ENCODE measurements at regions of chr22 and their contacts with region 1.

Region 1: DNA sequence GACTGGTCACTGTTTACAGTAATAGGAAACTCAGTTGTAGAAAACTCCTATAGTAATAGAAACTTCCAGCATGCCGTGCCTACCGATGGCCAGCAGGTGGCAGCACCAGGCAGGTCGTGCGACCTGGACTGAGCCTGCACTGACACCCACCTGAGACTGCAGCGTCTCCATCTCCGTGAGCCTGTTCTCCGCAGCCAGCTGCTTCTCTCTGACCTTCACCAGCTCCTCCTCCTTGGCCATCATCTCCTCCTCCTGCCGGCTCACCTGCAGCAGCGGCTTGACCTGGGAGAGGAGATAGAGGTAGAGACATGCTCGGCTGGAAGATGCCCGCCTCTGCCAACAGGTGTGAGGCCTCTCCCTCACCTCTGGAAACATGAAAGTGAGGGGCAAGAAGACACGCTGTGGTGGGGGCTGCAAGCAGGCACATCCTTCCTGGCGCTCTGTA is 48.5 kb downstream of the APOL1 start:
- DNase-seq: peak; percentile 85
- ATAC-seq: peak; percentile 89
- H3K4me3 ChIP-seq: no peak overlapping the region
- H3K4me3 Mint-ChIP-seq: no peak overlapping the region
- H3K27ac ChIP-seq: peak overlapping the region in 1 of 2 donors; percentile 25
- H3K27ac Mint-ChIP-seq: peak overlapping the region; percentile 68
- H3K4me1 ChIP-seq: peaks cover 0 to 4% of the 10 kb centered on the region in 2 donors
- H3K4me1 Mint-ChIP-seq: peaks cover 8% of the 10 kb centered on the region
- H3K27me3 ChIP-seq: no peaks in the 10 kb centered on the region
- H3K27me3 Mint-ChIP-seq: no peaks in the 10 kb centered on the region
- CTCF ChIP-seq: peak; percentile 97

Region 2: GRCh38 chr22:36081023-36081431 is 220.4 kb before region 1 on chr22:
- CTCF ChIA-PET with region 1: no interaction called
- POLR2A ChIA-PET with region 1: no interaction called
- intact Hi-C with region 1: no loop called
- DNase-seq: no peak
- ATAC-seq: no peak
- H3K4me3 ChIP-seq: no peak overlapping the region
- H3K4me3 Mint-ChIP-seq: no peak overlapping the region
- H3K27ac ChIP-seq: no peak overlapping the region
- H3K27ac Mint-ChIP-seq: no peak overlapping the region
- H3K4me1 ChIP-seq: peaks cover 0 to under 1% of the 10 kb centered on the region in 2 donors
- H3K4me1 Mint-ChIP-seq: no peaks in the 10 kb centered on the region
- H3K27me3 ChIP-seq: no peaks in the 10 kb centered on the region
- H3K27me3 Mint-ChIP-seq: peaks cover 9% of the 10 kb centered on the region
- CTCF ChIP-seq: no peak

Region 3: DNA sequence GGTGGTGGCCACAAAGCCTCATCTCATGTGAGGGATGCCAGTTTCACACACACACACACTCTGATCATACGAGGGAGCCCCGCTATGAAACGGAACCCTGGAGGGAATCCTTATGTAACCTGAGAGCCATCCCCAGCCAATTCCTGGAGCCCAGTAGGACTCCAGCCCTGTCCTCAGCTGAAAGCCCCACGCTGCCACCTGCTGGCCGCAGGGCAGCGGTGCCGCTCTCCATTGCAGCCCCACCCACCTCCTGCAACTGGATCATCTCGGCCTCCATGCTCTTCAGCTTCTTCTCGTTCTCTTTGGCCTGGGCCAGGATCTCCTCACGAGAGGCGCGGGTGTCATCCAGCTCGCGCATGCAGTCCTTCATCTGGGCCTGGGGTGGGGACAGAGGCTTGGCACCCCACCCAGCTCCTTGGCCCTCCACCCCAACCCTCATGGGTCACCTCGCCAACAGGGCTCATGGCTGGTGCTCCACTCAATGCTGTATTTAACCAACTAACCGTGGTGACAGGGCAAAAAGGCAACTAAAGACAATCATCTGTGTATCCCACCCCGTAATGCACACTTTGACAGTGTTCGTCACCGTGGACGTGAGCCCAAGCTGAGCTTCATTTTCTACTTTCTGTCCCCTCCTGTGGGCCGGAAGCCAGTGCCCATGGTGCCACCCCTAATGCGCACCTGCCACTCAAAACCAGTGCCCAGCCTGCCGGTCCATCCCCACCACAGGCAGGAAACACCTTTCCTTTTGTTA is 14.8 kb before region 1 on chr22:
- CTCF ChIA-PET with region 1: interaction called, 24 read pairs
- POLR2A ChIA-PET with region 1: interaction called, 3 read pairs
- intact Hi-C with region 1: no loop called
- DNase-seq: peak; percentile 74
- ATAC-seq: peak; percentile 87
- H3K4me3 ChIP-seq: no peak overlapping the region
- H3K4me3 Mint-ChIP-seq: no peak overlapping the region
- H3K27ac ChIP-seq: peak overlapping the region in 1 of 2 donors; percentile 28
- H3K27ac Mint-ChIP-seq: peak overlapping the region; percentile 12
- H3K4me1 ChIP-seq: no peaks in the 10 kb centered on the region
- H3K4me1 Mint-ChIP-seq: no peaks in the 10 kb centered on the region
- H3K27me3 ChIP-seq: no peaks in the 10 kb centered on the region
- H3K27me3 Mint-ChIP-seq: no peaks in the 10 kb centered on the region
- CTCF ChIP-seq: peak; percentile 86

Region 4: DNA sequence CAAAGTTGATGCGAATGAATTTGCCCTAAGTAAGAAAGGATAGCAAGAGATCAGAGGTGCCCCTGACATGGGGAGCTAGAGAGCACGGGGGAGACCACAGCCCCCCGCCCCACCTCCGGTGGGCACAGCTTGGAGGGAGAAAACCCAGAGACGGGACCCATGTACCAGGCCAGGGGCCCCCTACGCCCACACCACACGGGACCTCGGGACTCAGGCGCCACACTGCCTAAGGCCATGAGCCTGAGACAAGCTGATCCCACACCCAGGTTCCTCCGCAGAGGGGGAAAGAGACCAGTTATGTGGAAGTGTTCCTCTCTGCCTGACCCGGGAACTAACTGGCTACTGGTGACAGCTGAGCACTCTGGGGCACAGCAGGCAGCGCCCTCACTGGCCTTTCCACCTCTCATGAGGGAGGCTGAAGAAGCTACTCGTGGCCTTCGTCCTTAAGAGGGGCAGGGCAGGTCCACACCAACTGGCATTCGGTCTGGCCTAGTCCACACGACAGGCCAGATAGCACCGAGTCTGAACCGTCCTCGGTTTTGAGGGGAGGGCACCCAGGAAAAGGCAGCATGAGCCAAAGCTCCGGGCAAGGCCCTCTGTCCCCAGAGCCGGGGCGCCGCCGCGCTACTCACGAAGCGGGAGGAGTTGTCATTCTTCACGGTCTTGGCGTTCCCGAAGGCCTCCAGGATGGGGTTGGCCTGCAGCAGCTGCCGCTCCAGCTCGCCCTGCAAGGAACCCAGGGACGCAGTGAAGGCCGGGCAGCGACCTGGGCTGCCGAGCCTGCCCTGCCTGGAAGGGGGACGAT is 20.6 kb after region 1 on chr22:
- CTCF ChIA-PET with region 1: interaction called, 35 read pairs
- POLR2A ChIA-PET with region 1: no interaction called
- intact Hi-C with region 1: no loop called
- DNase-seq: no peak
- ATAC-seq: no peak
- H3K4me3 ChIP-seq: no peak overlapping the region
- H3K4me3 Mint-ChIP-seq: no peak overlapping the region
- H3K27ac ChIP-seq: no peak overlapping the region
- H3K27ac Mint-ChIP-seq: peak overlapping the region; percentile 46
- H3K4me1 ChIP-seq: no peaks in the 10 kb centered on the region
- H3K4me1 Mint-ChIP-seq: no peaks in the 10 kb centered on the region
- H3K27me3 ChIP-seq: no peaks in the 10 kb centered on the region
- H3K27me3 Mint-ChIP-seq: no peaks in the 10 kb centered on the region
- CTCF ChIP-seq: no peak

Region 5: DNA sequence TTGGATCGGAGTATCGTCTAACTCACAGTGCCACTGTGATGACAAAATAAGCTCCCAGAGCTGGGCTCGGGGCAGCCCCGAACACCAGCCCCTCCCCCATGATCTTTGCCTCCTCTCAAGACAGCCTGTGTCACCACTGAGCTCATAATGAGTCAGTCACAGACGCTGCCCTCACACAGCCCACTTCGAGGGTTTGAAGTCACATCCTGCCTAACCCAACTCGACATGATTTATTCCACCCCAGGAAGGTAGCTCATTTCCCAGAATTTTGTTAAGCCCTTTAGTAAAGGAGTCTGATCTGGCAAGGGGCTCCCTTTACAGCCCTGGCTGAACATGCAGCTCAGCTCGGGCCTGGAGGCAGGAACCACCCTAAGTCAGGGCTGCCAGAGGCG is 63.6 kb after region 1 on chr22:
- CTCF ChIA-PET with region 1: interaction called, 14 read pairs
- POLR2A ChIA-PET with region 1: no interaction called
- intact Hi-C with region 1: no loop called
- DNase-seq: peak; percentile 77
- ATAC-seq: peak; percentile 88
- H3K4me3 ChIP-seq: no peak overlapping the region
- H3K4me3 Mint-ChIP-seq: peak overlapping the region; percentile 83
- H3K27ac ChIP-seq: peak overlapping the region; percentile 43 to 92
- H3K27ac Mint-ChIP-seq: peak overlapping the region; percentile 97
- H3K4me1 ChIP-seq: peaks cover 92 to 99% of the 10 kb centered on the region in 2 donors
- H3K4me1 Mint-ChIP-seq: peaks cover 91% of the 10 kb centered on the region
- H3K27me3 ChIP-seq: no peaks in the 10 kb centered on the region
- H3K27me3 Mint-ChIP-seq: no peaks in the 10 kb centered on the region
- CTCF ChIP-seq: no peak

Region 6: GRCh38 chr22:36409911-36410756 is 108.7 kb after region 1 on chr22:
- CTCF ChIA-PET with region 1: interaction called, 21 read pairs
- POLR2A ChIA-PET with region 1: no interaction called
- intact Hi-C with region 1: no loop called
- DNase-seq: peak; percentile 84
- ATAC-seq: peak; percentile 63
- H3K4me3 ChIP-seq: peak overlapping the region in 4 of 5 experiments; percentile 27 to 47 (median 38)
- H3K4me3 Mint-ChIP-seq: peak overlapping the region; percentile 87
- H3K27ac ChIP-seq: peak overlapping the region; percentile 79 to 82
- H3K27ac Mint-ChIP-seq: peak overlapping the region; percentile 92
- H3K4me1 ChIP-seq: peaks cover 54 to 70% of the 10 kb centered on the region in 2 donors
- H3K4me1 Mint-ChIP-seq: peaks cover 59% of the 10 kb centered on the region
- H3K27me3 ChIP-seq: no peaks in the 10 kb centered on the region
- H3K27me3 Mint-ChIP-seq: no peaks in the 10 kb centered on the region
- CTCF ChIP-seq: no peak

Region 7: GRCh38 chr22:36481393-36482168 is 180.2 kb after region 1 on chr22 and contains the start of gene TXN2:
- CTCF ChIA-PET with region 1: interaction called, 607 read pairs
- POLR2A ChIA-PET with region 1: interaction called, 11 read pairs
- intact Hi-C with region 1: loop called (anchors 1 kb)
- DNase-seq: peak; percentile 98
- ATAC-seq: peak; percentile 87
- H3K4me3 ChIP-seq: peak within 1 kb of the TSS; percentile 82 to 90 (median 86)
- H3K4me3 Mint-ChIP-seq: peak within 1 kb of the TSS; percentile 95
- H3K27ac ChIP-seq: peak within 1 kb of the TSS; percentile 95 to 98
- H3K27ac Mint-ChIP-seq: peak within 1 kb of the TSS; percentile 93
- H3K4me1 ChIP-seq: peaks cover 11 to 18% of the 10 kb centered on the region in 2 donors
- H3K4me1 Mint-ChIP-seq: peaks cover 17% of the 10 kb centered on the region
- H3K27me3 ChIP-seq: no peaks in the 10 kb centered on the region
- H3K27me3 Mint-ChIP-seq: no peaks in the 10 kb centered on the region
- CTCF ChIP-seq: no peak
- total RNA-seq, gene TXN2: 37.4 and 39.6 TPM in 2 replicates

Measured in B cell (primary cell).